BJ (cell line): ENCODE measurements at regions of chr17 and their contacts with region 1.

Region 1: GRCh38 chr17:28346746-28347246 is 10.5 kb downstream of the POLDIP2 start:
- DNase-seq: no peak
- H3K4me3 ChIP-seq: no peak overlapping the region
- H3K27me3 ChIP-seq: no peaks in the 10 kb centered on the region
- CTCF ChIP-seq: peak; percentile 48

Region 2: GRCh38 chr17:27455914-27456680 is 890.7 kb before region 1 on chr17 and contains the start of gene KSR1:
- CTCF ChIA-PET with region 1: no interaction called
- POLR2A ChIA-PET with region 1: interaction called, 14 read pairs
- DNase-seq: no peak
- H3K4me3 ChIP-seq: peak within 1 kb of the TSS; percentile 75
- H3K27me3 ChIP-seq: 0 out of 2 replicates have a peak, but pooled peaks cover 2% of the 10 kb centered on the region
- CTCF ChIP-seq: peak; percentile 50
- polyA plus RNA-seq, gene KSR1: 5.6 and 6.8 TPM in 2 replicates

Region 3: DNA sequence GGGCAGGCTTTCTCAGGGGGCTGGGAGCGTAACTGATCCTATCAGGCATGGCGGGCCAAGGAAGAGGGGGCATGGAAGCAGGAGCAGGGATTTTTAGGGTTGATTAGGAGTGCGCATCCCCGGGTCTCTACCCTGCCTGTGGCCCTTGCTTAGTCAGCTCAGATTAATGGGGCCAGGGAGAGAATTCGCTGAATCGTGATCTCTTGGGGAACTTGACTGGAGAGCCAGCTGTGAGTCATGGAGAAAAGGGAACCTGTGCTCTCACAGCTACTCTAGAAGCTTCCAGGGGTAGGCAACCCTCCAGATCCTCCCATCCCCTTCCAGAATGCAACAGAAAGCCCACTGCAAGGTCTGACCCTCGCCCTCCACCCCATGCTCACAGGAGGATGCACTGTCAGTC is 163.0 kb after region 1 on chr17:
- CTCF ChIA-PET with region 1: no interaction called
- POLR2A ChIA-PET with region 1: no interaction called
- DNase-seq: no peak
- H3K4me3 ChIP-seq: no peak overlapping the region
- H3K27me3 ChIP-seq: peaks cover 53% of the 10 kb centered on the region
- CTCF ChIP-seq: no peak